ENCODE measurements at regions of chr5 and their contacts with region 1.

Region 1: GRCh38 chr5:72465601-72466563 is 41.3 kb downstream of the ZNF366 start:
- DNase-seq: no peak
- ATAC-seq: no peak

Region 2: DNA sequence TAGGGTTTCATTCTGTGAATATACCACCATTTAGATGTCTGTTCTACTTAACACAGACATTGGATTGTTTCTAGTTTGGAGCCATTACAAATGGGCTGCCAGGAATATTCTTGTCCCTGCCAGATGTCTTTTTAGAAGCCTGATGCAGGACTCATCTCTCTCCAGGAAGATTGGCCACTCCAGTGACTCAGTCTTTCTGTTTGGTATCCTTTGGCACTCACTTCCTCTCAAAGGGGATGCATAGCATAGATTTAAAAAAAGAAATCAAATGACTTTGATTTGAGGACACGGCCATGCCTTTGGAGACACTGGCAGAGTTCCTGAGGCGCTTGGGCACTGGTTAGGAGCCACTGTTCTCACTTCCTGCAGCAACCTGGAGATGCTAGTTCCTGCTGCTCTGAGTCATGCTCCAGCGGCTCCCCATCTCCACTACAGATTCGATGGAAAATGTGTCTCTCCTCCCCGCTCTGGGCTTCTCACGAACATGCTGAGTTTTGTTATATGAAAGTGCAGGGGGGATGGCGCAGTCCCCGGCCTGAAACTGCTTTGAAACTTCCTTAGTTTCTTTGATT is 44.8 kb after region 1 on chr5:
- intact Hi-C with region 1: loop called (anchors 10 kb)
- DNase-seq: peak; percentile 46
- ATAC-seq: peak; percentile 17

Measured in Right ventricle myocardium superior (tissue), 1 donor.